ENCODE measurements at regions of chr13 and their contacts with region 1.

Region 1: GRCh38 chr13:112942689-112943308 is 26.2 kb upstream of the MCF2L start:
- DNase-seq: peak; percentile 86
- ATAC-seq: peak; percentile 97
- H3K4me3 Mint-ChIP-seq: peak overlapping the region; percentile 87
- H3K27ac Mint-ChIP-seq: no peak overlapping the region
- H3K4me1 Mint-ChIP-seq: peaks cover 6% of the 10 kb centered on the region
- H3K27me3 Mint-ChIP-seq: peaks cover 25% of the 10 kb centered on the region
- CTCF ChIP-seq: peak; percentile 78

Region 2: GRCh38 chr13:111559612-111560403 is 1383.0 kb before region 1 on chr13:
- CTCF ChIA-PET with region 1: no interaction called
- POLR2A ChIA-PET with region 1: no interaction called
- intact Hi-C with region 1: no loop called
- DNase-seq: no peak
- ATAC-seq: no peak
- H3K4me3 Mint-ChIP-seq: no peak overlapping the region
- H3K27ac Mint-ChIP-seq: no peak overlapping the region
- H3K4me1 Mint-ChIP-seq: no peaks in the 10 kb centered on the region
- H3K27me3 Mint-ChIP-seq: peaks cover 5% of the 10 kb centered on the region
- CTCF ChIP-seq: no peak

Region 3: DNA sequence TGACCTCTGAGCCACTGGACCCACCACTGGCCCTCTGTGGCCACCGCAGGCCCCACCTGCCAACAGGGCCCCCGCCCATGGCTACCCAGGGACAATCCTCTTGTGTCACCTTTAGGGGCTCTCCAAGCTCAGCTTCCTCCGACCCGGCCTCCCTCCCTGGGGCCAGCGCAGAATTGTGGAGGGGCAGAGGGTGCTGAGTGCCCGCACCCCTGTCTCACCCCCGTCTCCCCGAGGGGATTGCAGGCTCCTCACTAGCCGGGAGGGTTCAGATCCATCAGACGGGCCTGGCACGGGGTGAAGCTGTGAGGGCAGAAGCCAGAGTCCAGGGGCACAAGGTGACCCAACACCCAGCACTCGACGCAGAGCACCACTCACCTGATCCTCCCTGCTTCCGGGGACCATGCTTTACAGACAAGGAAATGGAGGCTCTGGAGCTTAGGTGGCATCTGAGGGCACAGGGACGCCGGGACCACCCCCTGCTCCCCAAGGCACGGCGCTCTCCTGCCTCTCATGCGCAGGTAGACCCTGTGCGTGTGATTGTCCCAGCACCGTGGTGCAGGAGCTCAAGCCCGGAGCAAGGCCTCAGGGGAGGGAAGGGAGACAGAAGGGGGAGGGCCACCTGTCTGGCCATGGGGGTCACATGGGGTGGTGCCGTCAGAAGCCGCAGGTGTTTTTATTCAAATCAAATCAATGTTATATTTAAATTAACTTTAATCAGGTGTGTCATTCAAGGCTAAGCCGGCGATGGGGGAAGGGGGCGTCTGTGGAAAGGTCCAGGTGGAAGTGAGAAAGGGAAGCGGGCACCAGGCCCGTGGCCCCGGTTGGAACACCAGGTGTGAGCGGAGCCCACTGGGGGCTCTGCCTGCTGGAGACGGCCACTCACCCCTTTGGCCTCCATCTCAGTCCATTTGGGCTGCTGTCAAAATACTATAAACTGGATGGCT is 588.2 kb before region 1 on chr13:
- CTCF ChIA-PET with region 1: no interaction called
- POLR2A ChIA-PET with region 1: no interaction called
- intact Hi-C with region 1: no loop called
- DNase-seq: no peak
- ATAC-seq: no peak
- H3K4me3 Mint-ChIP-seq: no peak overlapping the region
- H3K27ac Mint-ChIP-seq: no peak overlapping the region
- H3K4me1 Mint-ChIP-seq: no peaks in the 10 kb centered on the region
- H3K27me3 Mint-ChIP-seq: no peaks in the 10 kb centered on the region
- CTCF ChIP-seq: no peak

Region 4: DNA sequence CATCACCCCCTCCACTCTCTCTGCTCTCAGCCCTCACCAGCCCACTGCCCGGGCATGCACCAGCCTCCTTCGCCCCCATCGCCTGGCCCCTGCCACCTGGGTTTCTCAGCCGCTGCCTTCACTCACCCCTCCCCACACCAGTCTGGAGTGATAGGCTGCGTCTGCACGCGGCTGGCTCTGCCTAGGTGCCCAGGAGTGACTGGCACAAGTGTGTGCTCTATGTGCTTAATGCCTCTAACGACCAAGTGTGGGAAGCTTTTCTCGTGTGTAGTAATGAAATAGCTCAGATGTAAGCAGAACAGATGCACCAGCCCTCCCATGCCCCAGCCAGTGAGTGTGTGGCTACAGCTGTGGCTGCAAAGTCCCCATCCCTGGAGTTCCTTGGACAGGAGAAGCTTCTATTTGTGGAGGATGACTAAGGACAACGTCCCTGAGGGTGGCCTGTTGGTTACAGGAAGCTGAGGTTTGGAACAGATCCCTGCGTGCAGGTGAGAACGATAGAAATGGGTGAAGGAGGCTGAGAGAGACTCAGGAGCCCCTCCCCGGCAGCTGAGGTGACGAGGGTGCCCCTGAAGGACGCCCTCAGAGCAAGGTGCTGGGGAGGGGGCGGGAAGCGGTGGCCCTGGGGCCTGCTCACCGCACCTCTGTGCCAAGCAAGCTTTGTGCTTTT is 217.3 kb before region 1 on chr13:
- CTCF ChIA-PET with region 1: no interaction called
- POLR2A ChIA-PET with region 1: no interaction called
- intact Hi-C with region 1: no loop called
- DNase-seq: no peak
- ATAC-seq: no peak
- H3K4me3 Mint-ChIP-seq: no peak overlapping the region
- H3K27ac Mint-ChIP-seq: no peak overlapping the region
- H3K4me1 Mint-ChIP-seq: peaks cover 8% of the 10 kb centered on the region
- H3K27me3 Mint-ChIP-seq: no peaks in the 10 kb centered on the region
- CTCF ChIP-seq: no peak

Region 5: GRCh38 chr13:112968908-112969691 is 26.3 kb after region 1 on chr13 and contains the start of gene MCF2L:
- CTCF ChIA-PET with region 1: interaction called, 3 read pairs
- POLR2A ChIA-PET with region 1: no interaction called
- intact Hi-C with region 1: loop called (anchors 1 kb)
- DNase-seq: peak; percentile 52
- ATAC-seq: peak; percentile 63
- H3K4me3 Mint-ChIP-seq: peak within 1 kb of the TSS; percentile 88
- H3K27ac Mint-ChIP-seq: peak within 1 kb of the TSS; percentile 47
- H3K4me1 Mint-ChIP-seq: peaks cover 11% of the 10 kb centered on the region
- H3K27me3 Mint-ChIP-seq: peaks cover 26% of the 10 kb centered on the region
- CTCF ChIP-seq: no peak
- total RNA-seq, gene MCF2L: 2.1 and 3.4 TPM in 2 replicates

Region 6: DNA sequence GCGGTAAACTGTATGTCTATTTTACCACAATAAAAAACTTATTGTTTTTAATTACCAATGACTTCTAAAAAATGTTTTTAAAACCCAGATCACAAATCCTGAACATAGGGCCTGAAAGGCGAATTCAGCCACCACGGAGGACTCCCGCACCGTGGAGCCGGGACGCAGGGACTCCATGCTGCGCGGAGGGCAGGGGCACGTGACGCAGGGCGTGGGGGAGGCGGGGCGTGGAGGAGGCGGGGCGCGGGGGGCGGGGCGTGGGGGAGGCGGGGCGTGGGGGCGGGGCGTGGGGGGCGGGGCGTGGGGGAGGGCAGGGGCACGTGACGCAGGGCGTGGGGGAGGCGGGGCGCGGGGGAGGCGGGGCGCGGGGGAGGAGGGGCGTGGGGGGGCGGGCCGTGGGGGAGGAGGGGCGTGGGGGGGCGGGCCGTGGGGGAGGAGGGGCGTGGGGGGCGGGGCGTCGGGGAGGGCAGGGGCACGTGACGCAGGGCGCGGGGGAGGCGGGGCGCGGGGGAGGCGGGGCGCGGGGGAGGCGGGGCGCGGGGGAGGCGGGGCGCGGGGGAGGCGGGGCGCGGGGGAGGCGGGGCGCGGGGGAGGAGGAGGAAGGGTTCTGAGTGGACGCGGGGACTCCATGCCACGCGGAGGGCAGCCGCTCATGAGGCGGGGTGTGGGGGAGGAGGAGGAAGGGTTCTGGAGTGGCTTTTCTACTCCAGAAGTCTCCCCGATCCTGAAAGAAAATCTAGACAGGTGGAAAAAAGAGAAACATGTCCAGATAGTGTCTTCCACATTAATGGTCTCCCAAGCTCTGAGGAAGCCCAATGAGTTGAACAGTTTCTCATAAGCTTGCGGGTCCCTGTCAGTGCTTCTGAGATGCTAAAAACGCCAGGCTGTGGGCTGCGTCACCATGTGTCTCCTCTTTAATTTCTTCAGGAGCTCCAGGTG is 211.3 kb after region 1 on chr13:
- CTCF ChIA-PET with region 1: no interaction called
- POLR2A ChIA-PET with region 1: no interaction called
- intact Hi-C with region 1: loop called (anchors 10 kb)
- DNase-seq: peak; percentile 50
- ATAC-seq: peak; percentile 85
- H3K4me3 Mint-ChIP-seq: peak overlapping the region; percentile 84
- H3K27ac Mint-ChIP-seq: peak overlapping the region; percentile 63
- H3K4me1 Mint-ChIP-seq: peaks cover 19% of the 10 kb centered on the region
- H3K27me3 Mint-ChIP-seq: peaks cover 12% of the 10 kb centered on the region
- CTCF ChIP-seq: no peak

Region 7: DNA sequence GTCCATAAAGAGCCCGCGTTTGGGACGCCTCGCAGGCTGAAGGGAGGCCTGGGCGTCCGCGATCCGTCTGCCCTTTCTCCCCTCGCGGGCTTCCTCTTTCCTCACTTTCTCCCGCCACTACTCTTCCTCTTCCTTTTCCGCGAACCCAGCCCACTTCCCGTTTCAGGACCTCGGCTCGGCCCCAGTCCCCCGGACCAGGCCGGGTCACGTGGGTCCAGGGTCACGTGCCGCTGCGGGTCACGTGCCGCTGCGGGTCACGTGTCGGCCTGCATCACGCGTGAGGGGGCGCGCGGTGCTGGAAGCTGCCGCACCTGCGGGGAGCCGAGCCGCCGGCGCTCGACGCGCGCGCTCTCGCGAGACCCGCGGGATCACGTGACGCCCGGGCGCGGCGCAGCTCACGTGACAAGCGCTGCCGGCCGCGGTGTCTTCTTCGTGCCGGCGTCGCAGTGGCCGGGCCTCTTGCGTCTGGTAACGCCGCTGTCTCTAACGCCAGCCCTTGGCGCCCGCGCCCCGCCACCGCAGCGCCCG is 354.1 kb after region 1 on chr13 and contains the start of gene LAMP1:
- CTCF ChIA-PET with region 1: no interaction called
- POLR2A ChIA-PET with region 1: no interaction called
- intact Hi-C with region 1: loop called (anchors 2 kb)
- DNase-seq: peak; percentile 100
- ATAC-seq: peak; percentile 80
- H3K4me3 Mint-ChIP-seq: peak within 1 kb of the TSS; percentile 94
- H3K27ac Mint-ChIP-seq: peak within 1 kb of the TSS; percentile 98
- H3K4me1 Mint-ChIP-seq: peaks cover 45% of the 10 kb centered on the region
- H3K27me3 Mint-ChIP-seq: peaks cover 16% of the 10 kb centered on the region
- CTCF ChIP-seq: no peak
- total RNA-seq, gene LAMP1: 83.7 and 86.2 TPM in 2 replicates

Region 8: GRCh38 chr13:113452942-113453901 is 510.4 kb after region 1 on chr13 and contains the start of gene ADPRHL1:
- CTCF ChIA-PET with region 1: interaction called, 3 read pairs
- POLR2A ChIA-PET with region 1: no interaction called
- intact Hi-C with region 1: loop called (anchors 1 kb)
- DNase-seq: no peak
- ATAC-seq: no peak
- H3K4me3 Mint-ChIP-seq: no peak within 1 kb of the TSS
- H3K27ac Mint-ChIP-seq: no peak within 1 kb of the TSS
- H3K4me1 Mint-ChIP-seq: peaks cover 7% of the 10 kb centered on the region
- H3K27me3 Mint-ChIP-seq: no peaks in the 10 kb centered on the region
- CTCF ChIP-seq: no peak
- total RNA-seq, gene ADPRHL1: 0.84 and 0.93 TPM in 2 replicates

Measured in activated B cell treated with CpG ODN at 0.5 μM for 24 hours (primary cell).